ENCODE measurements at regions of chr3 and their contacts with region 1.

Region 1: GRCh38 chr3:121883507-121883906 is 10.7 kb upstream of the SLC15A2 start:
- DNase-seq: no peak
- H3K4me3 Mint-ChIP-seq: no peak overlapping the region
- H3K27ac Mint-ChIP-seq: no peak overlapping the region
- H3K4me1 Mint-ChIP-seq: no peaks in the 10 kb centered on the region
- H3K27me3 Mint-ChIP-seq: no peaks in the 10 kb centered on the region

Region 2: DNA sequence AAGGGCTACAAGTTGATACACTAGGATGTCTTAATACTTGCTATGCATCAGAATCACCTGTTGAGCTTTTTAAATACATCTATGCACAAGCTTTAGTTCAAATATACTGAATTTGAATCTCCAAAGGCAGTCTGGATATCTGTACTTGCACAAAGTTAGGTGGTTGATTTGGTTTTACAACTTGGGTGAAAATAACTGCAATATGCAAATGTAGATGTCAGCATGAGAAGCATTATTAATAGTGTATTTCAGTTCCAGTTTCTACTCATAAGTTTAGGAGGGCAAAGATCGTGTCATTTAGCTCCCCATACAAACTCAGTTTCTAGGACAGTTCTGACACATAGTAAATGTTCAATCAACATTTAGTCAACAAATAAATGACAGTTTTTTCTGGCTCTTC is 74.3 kb before region 1 on chr3:
- CTCF ChIA-PET with region 1: no interaction called
- intact Hi-C with region 1: no loop called
- DNase-seq: no peak
- H3K4me3 Mint-ChIP-seq: no peak overlapping the region
- H3K27ac Mint-ChIP-seq: no peak overlapping the region
- H3K4me1 Mint-ChIP-seq: peaks cover 13% of the 10 kb centered on the region
- H3K27me3 Mint-ChIP-seq: no peaks in the 10 kb centered on the region

Region 3: DNA sequence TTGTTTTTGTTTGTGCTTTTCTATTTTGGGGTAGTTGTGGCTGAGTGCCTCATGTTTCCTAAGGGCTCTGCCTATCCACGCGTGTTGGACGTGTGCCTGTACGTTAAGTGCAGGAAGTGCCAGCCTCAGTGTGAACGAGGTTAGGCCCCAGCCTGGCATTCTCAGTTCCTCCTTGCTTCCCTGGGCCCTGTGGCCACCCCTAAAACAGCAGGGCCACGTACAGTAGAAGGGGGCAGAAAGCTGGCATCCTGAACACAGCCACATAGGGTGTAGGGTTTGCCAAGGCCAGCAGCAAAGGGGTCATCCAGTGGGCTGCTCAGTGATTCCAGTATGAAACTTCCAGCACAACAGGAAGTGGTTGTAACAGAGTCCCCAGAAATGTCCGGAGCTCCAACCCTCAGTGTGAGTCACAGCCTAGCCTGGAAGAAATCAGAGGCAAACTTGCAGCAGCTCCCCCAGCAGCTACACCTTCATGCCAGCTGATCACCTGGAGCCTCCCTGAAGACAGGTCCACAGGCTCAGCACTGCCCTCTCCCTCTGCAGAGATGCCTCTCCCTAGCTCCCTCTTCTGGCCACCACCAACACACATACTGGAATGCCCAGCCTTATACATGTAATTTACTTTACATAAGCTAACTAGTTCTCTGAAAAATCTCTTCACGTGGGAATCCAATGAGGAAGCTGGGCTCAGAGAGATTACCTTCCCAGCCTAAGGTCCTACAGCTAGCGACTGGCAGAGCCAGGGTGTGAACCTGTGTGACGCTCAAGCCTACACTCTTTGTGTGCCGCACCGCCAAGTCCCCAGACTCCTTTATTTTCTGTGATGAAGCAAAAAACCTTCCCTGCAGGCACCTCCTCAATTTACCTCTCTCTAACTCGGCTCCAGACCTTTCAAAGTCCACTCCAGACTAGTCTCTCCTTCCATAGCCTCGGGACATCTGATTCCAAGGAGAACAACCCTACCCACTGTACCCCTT is 111.9 kb after region 1 on chr3:
- CTCF ChIA-PET with region 1: interaction called, 6 read pairs
- intact Hi-C with region 1: loop called (anchors 1 kb)
- DNase-seq: peak; percentile 45
- H3K4me3 Mint-ChIP-seq: no peak overlapping the region
- H3K27ac Mint-ChIP-seq: no peak overlapping the region
- H3K4me1 Mint-ChIP-seq: peaks cover 20% of the 10 kb centered on the region
- H3K27me3 Mint-ChIP-seq: no peaks in the 10 kb centered on the region

Region 4: DNA sequence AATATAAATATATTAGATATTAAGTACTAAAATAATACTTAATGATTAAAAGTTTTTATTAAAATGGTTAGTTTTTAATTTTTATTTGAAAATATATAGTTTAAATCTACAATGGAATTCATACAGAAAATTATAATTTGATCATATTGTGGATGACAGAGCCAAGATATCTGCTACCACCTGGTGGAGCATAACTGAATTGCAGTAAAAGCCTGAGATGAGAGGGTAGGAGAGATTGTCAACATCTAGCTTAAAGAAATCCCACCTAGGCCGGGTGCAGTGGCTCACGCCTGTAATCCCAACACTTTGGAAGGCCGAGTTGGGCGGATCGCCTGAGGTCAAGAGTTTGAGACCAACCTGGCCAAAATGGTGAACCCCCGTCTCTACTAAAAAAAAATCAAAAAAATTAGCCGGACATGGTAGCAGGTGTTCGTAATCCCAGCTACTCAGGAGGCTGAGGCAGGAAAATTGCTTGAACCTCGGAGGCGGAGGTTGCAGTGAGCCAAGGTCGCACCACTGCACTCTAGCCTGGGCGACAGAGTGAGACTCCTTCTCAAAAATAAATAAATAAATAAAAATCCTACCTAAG is 416.5 kb after region 1 on chr3:
- CTCF ChIA-PET with region 1: no interaction called
- intact Hi-C with region 1: loop called (anchors 1 kb)
- DNase-seq: peak; percentile 64
- H3K4me3 Mint-ChIP-seq: no peak overlapping the region
- H3K27ac Mint-ChIP-seq: no peak overlapping the region
- H3K4me1 Mint-ChIP-seq: peaks cover 16% of the 10 kb centered on the region
- H3K27me3 Mint-ChIP-seq: peaks cover 1% of the 10 kb centered on the region

Measured in activated naive CD4-positive, alpha-beta T cell treated with anti-CD3 and anti-CD28 coated beads for 36 hours (primary cell).